ACHN (cell line): ENCODE measurements at regions of chr7 and their contacts with region 1.

Region 1: GRCh38 chr7:103573479-103574058 is 127.6 kb upstream of the SLC26A5 start:
- DNase-seq: peak; percentile 63

Region 2: DNA sequence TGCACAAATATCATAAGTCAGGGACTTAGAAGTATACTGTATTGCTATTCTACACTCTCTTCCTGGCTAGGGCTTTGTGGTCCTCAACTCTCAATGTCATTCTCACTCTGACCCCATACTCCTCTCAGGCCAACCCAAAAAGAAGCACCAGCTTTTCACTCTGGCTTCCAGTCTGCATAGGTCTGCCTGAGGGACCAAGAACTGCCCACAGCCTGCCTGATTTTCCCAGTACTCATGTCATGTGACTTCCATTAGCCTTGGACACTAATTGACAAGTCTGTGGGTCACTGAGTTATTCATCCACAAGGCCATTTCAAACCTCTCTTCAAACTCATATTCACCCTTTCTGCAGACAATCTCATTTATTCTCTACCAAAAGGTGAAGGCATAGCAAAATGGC is 256.6 kb before region 1 on chr7:
- in situ Hi-C with region 1: no loop called
- DNase-seq: no peak

Region 3: DNA sequence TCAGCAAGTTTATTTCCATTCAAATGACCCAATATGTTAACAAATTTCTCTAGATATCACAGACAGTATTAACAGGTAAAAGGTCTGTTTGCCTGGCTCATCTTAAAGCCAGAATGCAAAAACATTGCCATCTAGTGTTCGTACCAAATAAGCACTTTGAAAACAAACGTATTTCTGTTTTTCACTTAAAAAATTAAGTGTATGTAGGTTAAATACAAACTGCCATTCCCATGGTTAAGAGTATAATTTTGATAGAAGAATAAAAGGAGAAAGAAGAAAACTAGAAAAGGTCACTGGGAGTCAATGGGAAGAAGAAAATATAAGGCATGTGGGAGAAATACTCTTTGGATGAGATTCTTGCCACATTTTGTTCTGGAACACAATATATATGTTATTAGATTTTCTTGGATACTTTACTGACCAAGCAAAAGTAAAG is 583.3 kb after region 1 on chr7:
- in situ Hi-C with region 1: loop called (anchors 25 kb)
- DNase-seq: peak; percentile 68